Heart right ventricle (tissue), 16 donors: ENCODE measurements at regions of chr12 and their contacts with region 1.

Region 1: GRCh38 chr12:85866986-85867776 is 6.9 kb upstream of the NTS start:
- DNase-seq: peak in 1 of 2 donors; percentile 41
- ATAC-seq: peak in 7 of 8 donors; percentile 78 to 90 (median 83)
- H3K4me3 ChIP-seq: peak overlapping the region in 4 of 10 donors; percentile 5 to 28 (median 12)
- H3K27ac ChIP-seq: peak overlapping the region in 2 of 10 donors; percentile 20 to 50
- H3K4me1 ChIP-seq: peaks cover 0 to 7% (median 0%) of the 10 kb centered on the region in 9 donors
- H3K27me3 ChIP-seq: no peaks in the 10 kb centered on the region
- CTCF ChIP-seq: peak; percentile 66 to 89 (median 80)

Region 2: GRCh38 chr12:85468356-85469157 is 398.6 kb before region 1 on chr12:
- intact Hi-C with region 1: loop called in 8 of 10 experiments (anchors 2 to 10 kb)
- DNase-seq: peak in 1 of 2 donors; percentile 12
- ATAC-seq: peak in 5 of 8 donors; percentile 25 to 62 (median 48)
- H3K4me3 ChIP-seq: peak overlapping the region in 9 of 10 donors; percentile 22 to 58 (median 46)
- H3K27ac ChIP-seq: no peak overlapping the region
- H3K4me1 ChIP-seq: peaks cover 0 to 8% (median 4%) of the 10 kb centered on the region in 9 donors
- H3K27me3 ChIP-seq: peaks cover 0 to 37% (median 11%) of the 10 kb centered on the region in 7 donors
- CTCF ChIP-seq: peak; percentile 48 to 85 (median 75)

Region 3: DNA sequence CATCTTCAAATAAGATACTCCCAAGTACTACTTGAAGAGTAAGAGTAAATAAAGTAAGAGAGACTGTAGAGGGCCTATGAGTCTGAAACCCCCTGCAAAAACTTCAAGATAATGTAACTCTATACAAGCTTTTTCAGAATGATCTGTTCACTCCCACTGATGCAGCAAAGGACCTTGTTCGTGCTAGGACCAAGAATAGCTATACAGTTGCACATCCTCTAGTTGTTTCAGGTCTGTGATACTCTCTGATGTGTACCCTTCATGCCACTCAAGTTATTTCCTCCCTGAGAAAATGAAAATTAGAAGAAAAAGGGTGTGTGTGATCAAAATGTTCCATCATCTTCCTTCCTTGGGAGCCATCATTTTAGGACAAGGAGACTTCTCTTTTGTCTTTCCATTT is 382.8 kb before region 1 on chr12:
- intact Hi-C with region 1: loop called in 4 of 10 experiments (anchors 2 to 10 kb)
- DNase-seq: no peak
- ATAC-seq: no peak
- H3K4me3 ChIP-seq: no peak overlapping the region
- H3K27ac ChIP-seq: no peak overlapping the region
- H3K4me1 ChIP-seq: no peaks in the 10 kb centered on the region
- H3K27me3 ChIP-seq: no peaks in the 10 kb centered on the region
- CTCF ChIP-seq: no peak

Region 4: GRCh38 chr12:85711735-85712390 is 155.3 kb before region 1 on chr12:
- intact Hi-C with region 1: loop called in 3 of 10 experiments (anchors 10 kb)
- DNase-seq: peak in 1 of 2 donors; percentile 21
- ATAC-seq: peak; percentile 32 to 97 (median 70)
- H3K4me3 ChIP-seq: no peak overlapping the region
- H3K27ac ChIP-seq: peak overlapping the region in 3 of 10 donors; percentile 53 to 66 (median 59)
- H3K4me1 ChIP-seq: peaks cover 0 to 32% (median 17%) of the 10 kb centered on the region in 9 donors
- H3K27me3 ChIP-seq: no peaks in the 10 kb centered on the region
- CTCF ChIP-seq: no peak

Region 5: GRCh38 chr12:85834378-85834777 is 32.8 kb before region 1 on chr12:
- intact Hi-C with region 1: loop called in 1 of 10 experiments (anchors 5 kb)
- DNase-seq: no peak
- ATAC-seq: no peak
- H3K4me3 ChIP-seq: peak overlapping the region in 9 of 10 donors; percentile 36 to 71 (median 61)
- H3K27ac ChIP-seq: peak overlapping the region in 8 of 10 donors; percentile 28 to 93 (median 86)
- H3K4me1 ChIP-seq: peaks cover 0 to 57% (median 26%) of the 10 kb centered on the region in 9 donors
- H3K27me3 ChIP-seq: no peaks in the 10 kb centered on the region
- CTCF ChIP-seq: no peak